Activated naive CD4-positive, alpha-beta T cell treated with anti-CD3 and anti-CD28 coated beads for 36 hours (primary cell): ENCODE measurements at regions of chr2 and their contacts with region 1.

Region 1: GRCh38 chr2:17646081-17646554 is 105.6 kb downstream of the VSNL1 start:
- DNase-seq: peak; percentile 77
- H3K4me3 Mint-ChIP-seq: no peak overlapping the region
- H3K27ac Mint-ChIP-seq: no peak overlapping the region
- H3K4me1 Mint-ChIP-seq: peaks cover 7% of the 10 kb centered on the region
- H3K27me3 Mint-ChIP-seq: no peaks in the 10 kb centered on the region

Region 2: DNA sequence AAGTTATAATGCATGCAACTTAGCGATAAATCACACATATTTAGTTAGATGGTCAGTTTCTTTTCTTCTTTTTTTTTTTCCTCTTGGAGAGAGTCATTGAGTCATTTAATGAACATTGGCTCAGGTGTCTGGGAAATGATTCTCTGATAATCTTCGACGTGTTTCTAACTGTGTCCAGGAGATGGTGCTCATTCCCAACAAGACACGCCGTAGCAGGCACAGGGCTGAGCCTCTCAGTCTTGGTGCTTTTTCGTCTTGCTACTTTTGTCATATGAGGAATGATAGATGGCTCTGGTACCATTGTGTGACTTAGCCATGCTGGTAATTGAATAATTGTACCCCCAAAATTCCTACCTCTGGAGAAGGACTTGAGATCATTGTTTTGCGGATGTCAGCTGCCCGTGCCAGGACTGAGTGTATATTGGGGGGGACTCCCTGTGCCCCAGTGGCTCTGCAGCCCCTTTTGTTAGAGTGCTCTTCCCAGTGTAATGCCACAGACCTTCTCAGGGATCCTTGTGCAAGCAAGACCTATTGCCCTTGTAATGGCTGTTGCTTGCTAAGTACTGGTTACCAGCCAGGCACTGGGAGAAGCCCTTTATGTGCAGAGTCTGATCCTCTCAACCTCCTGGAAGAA is 872.9 kb before region 1 on chr2:
- CTCF ChIA-PET with region 1: no interaction called
- intact Hi-C with region 1: loop called (anchors 10 kb)
- DNase-seq: peak; percentile 50
- H3K4me3 Mint-ChIP-seq: no peak overlapping the region
- H3K27ac Mint-ChIP-seq: no peak overlapping the region
- H3K4me1 Mint-ChIP-seq: no peaks in the 10 kb centered on the region
- H3K27me3 Mint-ChIP-seq: peaks cover 26% of the 10 kb centered on the region

Region 3: DNA sequence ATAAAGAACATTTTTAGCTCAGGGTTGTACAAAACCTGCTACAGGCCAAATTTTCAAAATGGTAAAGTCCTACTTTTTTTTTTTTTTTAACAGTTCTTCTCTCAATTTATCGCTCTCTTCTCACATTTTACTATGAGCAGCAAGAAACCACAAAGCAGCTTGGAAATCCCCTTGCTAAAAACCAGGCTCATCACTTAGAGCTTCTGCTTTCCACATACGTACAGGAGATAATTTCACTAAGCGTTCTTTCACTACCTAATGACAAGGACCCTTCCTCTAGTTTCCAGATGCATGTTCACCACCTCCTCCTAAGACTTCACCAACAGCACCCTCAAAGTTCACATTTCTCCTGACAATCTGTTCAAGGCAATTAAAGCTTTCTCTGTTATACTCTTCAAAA is 685.5 kb before region 1 on chr2:
- CTCF ChIA-PET with region 1: no interaction called
- intact Hi-C with region 1: no loop called
- DNase-seq: no peak
- H3K4me3 Mint-ChIP-seq: no peak overlapping the region
- H3K27ac Mint-ChIP-seq: no peak overlapping the region
- H3K4me1 Mint-ChIP-seq: no peaks in the 10 kb centered on the region
- H3K27me3 Mint-ChIP-seq: peaks cover 4% of the 10 kb centered on the region

Region 4: GRCh38 chr2:17043173-17043572 is 602.9 kb before region 1 on chr2:
- CTCF ChIA-PET with region 1: no interaction called
- intact Hi-C with region 1: no loop called
- DNase-seq: no peak
- H3K4me3 Mint-ChIP-seq: no peak overlapping the region
- H3K27ac Mint-ChIP-seq: no peak overlapping the region
- H3K4me1 Mint-ChIP-seq: no peaks in the 10 kb centered on the region
- H3K27me3 Mint-ChIP-seq: no peaks in the 10 kb centered on the region

Region 5: DNA sequence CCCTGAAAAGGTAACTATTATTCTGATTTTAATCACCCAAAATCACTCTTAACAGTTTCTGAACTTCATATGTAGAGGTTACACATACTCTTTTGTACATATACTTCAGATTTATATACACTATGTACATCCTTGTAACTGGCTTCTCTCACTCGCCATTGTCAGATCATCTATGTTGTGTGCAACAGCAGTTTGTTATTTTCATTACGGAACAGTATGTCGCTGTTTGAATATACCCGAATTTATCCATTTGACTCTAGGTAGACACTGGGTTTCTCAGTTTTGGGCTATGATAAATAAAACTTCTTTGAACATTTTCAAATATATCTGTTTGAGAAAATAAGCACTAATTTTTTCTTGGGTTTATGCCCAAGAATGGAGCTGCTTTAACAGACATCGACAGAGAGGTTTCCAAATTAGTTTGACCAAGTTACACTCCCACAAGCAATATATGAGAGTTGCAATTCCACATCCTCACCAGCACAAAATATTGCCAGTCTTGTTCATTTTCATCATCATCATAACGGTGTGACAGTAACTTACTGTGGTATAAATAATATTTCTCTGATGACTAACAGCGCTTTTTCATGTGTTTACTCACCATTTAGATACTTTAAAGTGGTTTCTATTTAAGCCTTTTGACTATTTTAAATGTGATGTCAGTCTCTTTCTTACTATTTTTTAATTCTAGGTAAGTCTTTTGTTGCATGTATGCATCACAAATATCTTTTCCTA is 26.6 kb after region 1 on chr2:
- CTCF ChIA-PET with region 1: interaction called, 59 read pairs
- intact Hi-C with region 1: loop called (anchors 1 kb)
- DNase-seq: no peak
- H3K4me3 Mint-ChIP-seq: no peak overlapping the region
- H3K27ac Mint-ChIP-seq: no peak overlapping the region
- H3K4me1 Mint-ChIP-seq: peaks cover 11% of the 10 kb centered on the region
- H3K27me3 Mint-ChIP-seq: no peaks in the 10 kb centered on the region

Region 6: DNA sequence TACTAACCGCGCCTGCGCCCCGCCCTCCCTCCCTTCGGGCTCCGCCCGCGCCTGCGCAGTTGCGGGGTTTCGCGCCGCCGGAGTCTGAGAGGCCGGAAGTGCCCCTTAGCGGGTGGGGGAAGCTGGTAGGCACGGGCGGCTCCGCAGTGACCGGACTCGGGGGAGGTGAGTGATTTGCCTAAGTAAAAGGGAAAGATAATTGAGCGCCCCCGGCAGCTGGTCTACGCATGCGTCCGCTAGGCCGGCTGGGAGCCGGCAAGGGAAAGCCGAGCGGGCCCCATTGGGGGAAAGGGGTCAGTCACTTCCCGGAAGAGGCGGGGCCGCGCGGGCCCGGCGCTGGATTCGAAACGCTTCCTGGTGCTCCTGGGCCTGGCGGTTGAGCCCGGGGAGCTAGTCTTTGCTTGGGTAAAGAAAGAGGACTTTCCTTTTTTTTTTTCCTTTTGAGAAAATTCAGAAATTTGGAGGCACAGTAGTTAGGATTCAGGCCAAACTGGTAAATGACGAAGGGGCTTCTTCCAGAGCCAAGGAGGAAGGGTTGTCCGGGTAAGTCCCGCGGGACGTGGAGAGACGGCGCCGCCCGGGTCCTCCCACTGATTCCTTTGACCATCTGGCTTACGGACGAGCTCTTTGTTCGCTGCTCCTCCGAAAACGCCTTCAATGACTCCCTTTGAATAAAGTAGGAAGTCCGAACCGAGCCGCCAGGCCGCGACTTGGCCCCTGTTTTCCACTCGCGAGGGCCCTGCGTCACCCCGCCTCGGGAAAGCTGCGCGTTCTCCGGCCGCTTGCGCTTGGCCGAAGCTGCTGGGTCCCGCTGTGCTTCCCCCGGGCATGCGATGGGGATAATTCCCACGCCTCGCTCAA is 107.9 kb after region 1 on chr2 and contains the starts of genes GEN1 and SMC6:
- CTCF ChIA-PET with region 1: interaction called, 3 read pairs
- intact Hi-C with region 1: loop called (anchors 1 kb)
- DNase-seq: peak; percentile 90
- H3K4me3 Mint-ChIP-seq: peak within 1 kb of the TSS; percentile 85
- H3K27ac Mint-ChIP-seq: peak within 1 kb of the TSS; percentile 96
- H3K4me1 Mint-ChIP-seq: peaks cover 31% of the 10 kb centered on the region
- H3K27me3 Mint-ChIP-seq: no peaks in the 10 kb centered on the region
- total RNA-seq, gene GEN1: 13.4 to 15.5 TPM
- total RNA-seq, gene SMC6: 21.6 to 22.8 TPM

Region 7: DNA sequence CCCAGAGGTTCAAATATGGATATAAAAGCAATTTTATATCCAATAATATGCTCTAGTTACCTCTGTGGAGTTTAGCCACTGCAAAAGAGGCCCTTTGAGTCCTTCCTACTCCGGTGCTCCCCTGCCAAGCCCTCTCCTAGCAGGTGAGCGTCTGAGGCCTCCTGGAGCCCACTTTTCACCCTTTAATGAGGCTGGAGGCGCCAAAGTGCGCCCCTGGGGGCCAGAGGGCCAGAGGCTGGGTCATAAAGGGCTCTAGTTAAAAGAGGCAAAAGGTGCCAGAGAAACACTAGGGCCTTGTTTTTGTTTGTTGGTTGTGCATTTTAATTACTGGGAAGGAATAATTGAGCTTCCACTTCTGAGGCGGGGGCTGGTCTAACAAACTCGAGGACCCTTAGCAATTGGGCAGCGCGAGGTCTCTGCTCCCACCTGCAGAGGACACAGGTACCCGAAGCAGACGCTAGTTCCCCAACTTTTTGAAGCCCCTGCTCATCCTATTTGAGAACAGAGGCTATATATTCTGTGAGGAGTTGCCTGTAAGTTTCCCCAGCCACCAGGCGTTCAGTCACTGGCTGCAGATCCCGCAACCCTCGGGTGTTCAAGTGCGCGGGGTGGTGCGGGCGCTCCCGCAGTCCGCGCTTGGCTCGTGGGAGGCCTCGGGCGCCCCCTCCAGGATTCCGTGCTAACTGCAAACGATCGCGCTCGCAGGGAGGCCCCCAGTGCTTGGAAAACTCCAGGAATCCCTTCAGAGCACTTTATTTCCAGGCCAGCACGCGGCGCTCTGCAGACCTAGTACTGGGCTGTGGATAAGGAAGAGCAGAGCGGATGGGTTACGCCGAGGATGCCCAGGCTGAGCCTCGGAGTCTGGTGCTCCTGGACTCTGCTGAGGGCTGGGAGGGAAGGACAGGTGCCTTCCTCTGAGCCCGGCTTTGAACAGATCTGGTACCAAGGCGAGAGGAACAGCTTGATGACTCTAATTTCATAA is 184.2 kb after region 1 on chr2:
- CTCF ChIA-PET with region 1: interaction called, 5 read pairs
- intact Hi-C with region 1: loop called (anchors 1 kb)
- DNase-seq: peak; percentile 64
- H3K4me3 Mint-ChIP-seq: no peak overlapping the region
- H3K27ac Mint-ChIP-seq: no peak overlapping the region
- H3K4me1 Mint-ChIP-seq: peaks cover 3% of the 10 kb centered on the region
- H3K27me3 Mint-ChIP-seq: peaks cover 31% of the 10 kb centered on the region

Region 8: GRCh38 chr2:18149645-18150246 is 503.6 kb after region 1 on chr2:
- CTCF ChIA-PET with region 1: no interaction called
- intact Hi-C with region 1: loop called (anchors 1 kb)
- DNase-seq: no peak
- H3K4me3 Mint-ChIP-seq: no peak overlapping the region
- H3K27ac Mint-ChIP-seq: no peak overlapping the region
- H3K4me1 Mint-ChIP-seq: no peaks in the 10 kb centered on the region
- H3K27me3 Mint-ChIP-seq: peaks cover 6% of the 10 kb centered on the region

Region 9: GRCh38 chr2:18378020-18378653 is 732.0 kb after region 1 on chr2:
- CTCF ChIA-PET with region 1: no interaction called
- intact Hi-C with region 1: loop called (anchors 1 kb)
- DNase-seq: peak; percentile 46
- H3K4me3 Mint-ChIP-seq: no peak overlapping the region
- H3K27ac Mint-ChIP-seq: no peak overlapping the region
- H3K4me1 Mint-ChIP-seq: no peaks in the 10 kb centered on the region
- H3K27me3 Mint-ChIP-seq: peaks cover 11% of the 10 kb centered on the region